ENCODE measurements at regions of chr4 and their contacts with region 1.

Region 1: DNA sequence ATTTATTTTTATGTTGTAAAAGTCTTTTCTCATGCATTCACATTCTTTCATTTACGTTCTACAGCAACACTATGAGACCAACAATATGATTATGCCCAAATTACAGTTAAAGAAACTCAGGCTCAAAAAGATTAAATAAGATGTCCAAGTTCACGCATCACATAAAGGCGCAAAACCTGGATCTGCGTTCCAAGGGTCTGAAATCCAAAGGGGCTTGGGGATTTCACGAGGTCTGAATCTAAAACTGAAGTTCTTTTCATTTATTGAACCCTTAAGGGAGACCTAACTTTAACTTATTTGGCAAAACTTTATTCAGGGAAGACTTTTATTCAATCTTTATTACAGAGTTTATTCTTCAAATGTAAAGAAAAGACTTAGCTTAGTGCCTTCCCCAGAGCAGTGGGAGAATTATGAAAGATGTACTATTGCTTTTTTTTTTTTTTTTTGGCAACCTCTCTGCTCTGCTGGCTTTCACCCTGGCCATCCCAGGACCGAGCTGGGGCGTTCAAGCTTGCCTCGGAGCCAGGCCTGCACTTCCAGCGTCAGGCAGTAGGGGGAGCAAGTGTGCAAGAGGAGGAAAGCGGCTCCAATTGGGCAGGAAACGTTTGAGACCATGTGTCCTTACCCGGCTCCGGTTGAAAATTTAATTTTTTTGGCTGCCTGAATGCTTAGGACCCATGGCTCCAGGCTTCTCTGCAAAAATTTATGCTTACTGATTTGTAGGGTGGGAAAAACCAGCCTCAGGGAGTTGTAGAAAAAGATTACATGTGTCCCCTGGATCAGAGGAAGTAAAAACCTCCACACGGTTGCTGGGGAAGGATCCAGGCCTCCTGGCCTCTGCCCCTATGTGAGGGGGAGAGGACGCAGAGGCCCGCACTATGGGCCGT is 344.3 kb upstream of the KLF3 start:
- DNase-seq: peak; percentile 85
- CTCF ChIP-seq: peak; percentile 98

Region 2: GRCh38 chr4:38302910-38303309 is 16.8 kb before region 1 on chr4:
- CTCF ChIA-PET with region 1: interaction called, 47 read pairs
- POLR2A ChIA-PET with region 1: interaction called, 5 read pairs
- DNase-seq: no peak
- CTCF ChIP-seq: no peak

Region 3: GRCh38 chr4:38523524-38524448 is 204.1 kb after region 1 on chr4:
- CTCF ChIA-PET with region 1: interaction called, 12 read pairs
- POLR2A ChIA-PET with region 1: interaction called, 4 read pairs
- DNase-seq: peak; percentile 85
- CTCF ChIP-seq: no peak

Region 4: DNA sequence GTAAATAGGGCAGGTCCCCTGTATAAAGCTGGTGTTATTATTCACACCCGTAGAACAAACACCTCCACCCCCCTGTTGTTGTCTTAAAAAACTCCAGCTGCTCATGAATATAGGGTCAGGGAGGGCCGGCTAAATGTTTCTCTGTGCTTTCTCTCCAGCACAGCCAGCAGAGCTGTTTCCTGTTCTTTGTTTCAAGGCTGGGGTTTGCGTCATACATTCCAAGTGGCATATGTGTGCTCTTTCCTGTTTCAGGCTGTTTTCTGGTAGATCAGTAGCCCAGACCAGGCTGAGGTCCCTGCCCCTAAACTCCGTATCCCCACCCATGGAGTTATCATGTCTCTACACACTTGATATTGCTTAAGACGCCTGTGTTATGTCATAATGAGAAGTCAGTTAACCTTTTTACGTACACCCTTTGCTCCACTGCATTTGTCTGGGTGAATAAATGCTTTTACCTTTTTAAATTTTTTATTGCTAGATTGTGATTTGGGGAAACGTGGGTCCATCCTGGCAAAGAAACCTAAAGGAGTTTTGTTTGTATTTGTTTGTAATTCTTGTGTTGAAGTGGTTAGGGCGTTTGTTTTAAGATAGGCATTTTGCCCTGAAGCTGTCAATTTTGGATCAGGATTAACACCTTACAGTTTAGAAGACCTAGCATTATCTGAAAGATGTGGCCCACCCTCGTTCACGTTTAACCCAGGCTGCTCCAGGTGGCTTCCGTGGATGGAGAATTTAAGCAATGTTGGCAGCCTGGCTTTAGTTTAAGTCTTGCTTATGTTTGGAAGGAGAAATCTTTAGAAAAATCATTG is 347.6 kb after region 1 on chr4:
- CTCF ChIA-PET with region 1: interaction called, 31 read pairs
- POLR2A ChIA-PET with region 1: no interaction called
- DNase-seq: peak; percentile 33
- CTCF ChIP-seq: no peak

Region 5: DNA sequence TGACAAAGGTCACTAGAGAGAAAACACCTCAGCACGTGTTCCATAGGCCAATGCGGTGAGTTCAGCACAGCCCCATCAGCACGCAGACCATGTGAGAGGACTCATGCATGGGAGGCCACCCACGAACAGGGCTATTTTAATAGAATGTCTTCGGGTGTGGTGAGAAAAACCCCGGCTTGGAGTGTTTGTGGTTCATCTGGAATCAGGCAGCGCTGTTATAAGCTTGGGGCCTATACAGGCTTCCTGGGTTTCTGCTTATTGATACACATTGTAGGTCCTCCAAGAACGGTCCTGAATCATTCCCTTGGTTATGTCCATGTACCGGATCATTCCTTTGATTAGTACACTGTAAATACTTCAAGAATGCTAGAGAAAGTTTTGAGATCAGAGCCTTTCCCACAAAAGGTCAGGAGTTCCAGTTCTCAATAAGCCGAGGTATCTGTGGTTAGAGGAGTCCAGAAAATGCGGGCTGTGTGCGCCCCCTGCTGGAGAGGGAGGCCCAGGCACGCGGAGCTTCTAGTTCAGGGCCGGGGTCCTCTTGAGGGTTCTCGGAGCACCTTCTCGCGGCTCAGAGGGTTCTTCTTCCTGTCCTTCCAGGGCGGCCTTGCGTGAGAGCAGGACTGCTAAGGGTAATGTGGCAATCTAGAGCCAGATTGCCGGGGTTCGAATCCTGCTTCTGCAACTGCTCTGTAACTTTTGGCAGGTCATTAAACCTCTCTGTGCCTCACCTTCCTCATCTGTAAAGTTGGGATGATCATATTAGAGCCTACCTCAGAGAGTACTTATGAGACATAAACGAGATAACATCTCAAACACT is 411.3 kb after region 1 on chr4:
- CTCF ChIA-PET with region 1: interaction called, 18 read pairs
- POLR2A ChIA-PET with region 1: no interaction called
- DNase-seq: peak; percentile 81
- CTCF ChIP-seq: peak; percentile 87